Natural killer cell (primary cell): ENCODE measurements at regions of chr22 and their contacts with region 1.

Region 1: GRCh38 chr22:30104501-30105156 is 24.4 kb downstream of the HORMAD2 start:
- DNase-seq: peak in 1 of 2 donors; percentile 44
- ATAC-seq: no peak
- H3K4me3 ChIP-seq: no peak overlapping the region
- H3K4me3 Mint-ChIP-seq: no peak overlapping the region
- H3K27ac ChIP-seq: no peak overlapping the region
- H3K27ac Mint-ChIP-seq: no peak overlapping the region
- H3K4me1 ChIP-seq: peaks cover 3% of the 10 kb centered on the region
- H3K4me1 Mint-ChIP-seq: peaks cover 0 to 5% of the 10 kb centered on the region in 2 donors
- H3K27me3 ChIP-seq: no peaks in the 10 kb centered on the region
- H3K27me3 Mint-ChIP-seq: peaks cover 0 to 6% of the 10 kb centered on the region in 2 donors
- CTCF ChIP-seq: no peak

Region 2: DNA sequence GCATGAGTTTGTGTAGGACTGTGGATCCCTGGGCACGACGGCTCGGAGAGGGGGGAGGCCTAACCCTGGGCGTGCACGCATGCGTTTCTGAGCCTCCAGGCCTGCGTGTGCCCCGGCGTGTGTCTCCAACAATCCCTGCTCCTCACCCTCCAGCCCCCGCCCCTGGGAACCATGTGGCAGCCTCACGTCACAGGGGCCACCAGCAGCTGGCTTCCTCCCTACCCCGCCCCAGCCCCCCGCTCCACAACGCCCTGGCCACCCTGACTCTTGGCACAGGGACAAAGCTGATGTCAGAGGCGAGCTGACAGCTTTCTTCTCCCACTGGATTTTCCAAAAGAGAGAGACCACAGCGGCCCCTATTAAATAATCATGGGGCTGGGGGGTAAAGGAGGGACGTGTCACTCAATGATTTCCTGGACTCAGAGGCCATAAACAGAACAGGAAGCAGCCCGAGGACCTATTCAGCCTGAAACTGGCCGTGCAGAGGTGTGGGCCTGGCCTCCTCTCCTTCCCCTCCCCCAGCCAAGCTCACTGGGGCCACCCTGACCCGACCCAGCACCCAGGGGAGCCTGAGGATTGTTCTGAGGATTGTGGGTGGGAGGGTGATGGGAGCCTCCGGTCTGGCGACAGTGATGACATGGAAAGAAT is 148.7 kb after region 1 on chr22:
- intact Hi-C with region 1: loop called (anchors 1 kb)
- DNase-seq: no peak
- ATAC-seq: no peak
- H3K4me3 ChIP-seq: no peak overlapping the region
- H3K4me3 Mint-ChIP-seq: no peak overlapping the region
- H3K27ac ChIP-seq: no peak overlapping the region
- H3K27ac Mint-ChIP-seq: peak overlapping the region in 1 of 2 donors; percentile 40
- H3K4me1 ChIP-seq: peaks cover 53% of the 10 kb centered on the region
- H3K4me1 Mint-ChIP-seq: peaks cover 6 to 15% of the 10 kb centered on the region in 2 donors
- H3K27me3 ChIP-seq: no peaks in the 10 kb centered on the region
- H3K27me3 Mint-ChIP-seq: peaks cover 5 to 7% of the 10 kb centered on the region in 2 donors
- CTCF ChIP-seq: no peak

Region 3: GRCh38 chr22:30386960-30387827 is 282.6 kb after region 1 on chr22 and contains the start of gene RNF215:
- intact Hi-C with region 1: loop called (anchors 2 kb)
- DNase-seq: peak; percentile 87 to 90
- ATAC-seq: peak; percentile 94 to 97 (median 95)
- H3K4me3 ChIP-seq: peak within 1 kb of the TSS; percentile 9
- H3K4me3 Mint-ChIP-seq: peak within 1 kb of the TSS; percentile 52
- H3K27ac ChIP-seq: no peak within 1 kb of the TSS
- H3K27ac Mint-ChIP-seq: peak within 1 kb of the TSS in 1 of 2 donors; percentile 76
- H3K4me1 ChIP-seq: peaks cover 12% of the 10 kb centered on the region
- H3K4me1 Mint-ChIP-seq: peaks cover 5 to 6% of the 10 kb centered on the region in 2 donors
- H3K27me3 ChIP-seq: no peaks in the 10 kb centered on the region
- H3K27me3 Mint-ChIP-seq: peaks cover 0 to 5% of the 10 kb centered on the region in 2 donors
- CTCF ChIP-seq: peak; percentile 89
- total RNA-seq, gene RNF215: 7.5 to 9.8 (median 9.5) TPM

Region 4: DNA sequence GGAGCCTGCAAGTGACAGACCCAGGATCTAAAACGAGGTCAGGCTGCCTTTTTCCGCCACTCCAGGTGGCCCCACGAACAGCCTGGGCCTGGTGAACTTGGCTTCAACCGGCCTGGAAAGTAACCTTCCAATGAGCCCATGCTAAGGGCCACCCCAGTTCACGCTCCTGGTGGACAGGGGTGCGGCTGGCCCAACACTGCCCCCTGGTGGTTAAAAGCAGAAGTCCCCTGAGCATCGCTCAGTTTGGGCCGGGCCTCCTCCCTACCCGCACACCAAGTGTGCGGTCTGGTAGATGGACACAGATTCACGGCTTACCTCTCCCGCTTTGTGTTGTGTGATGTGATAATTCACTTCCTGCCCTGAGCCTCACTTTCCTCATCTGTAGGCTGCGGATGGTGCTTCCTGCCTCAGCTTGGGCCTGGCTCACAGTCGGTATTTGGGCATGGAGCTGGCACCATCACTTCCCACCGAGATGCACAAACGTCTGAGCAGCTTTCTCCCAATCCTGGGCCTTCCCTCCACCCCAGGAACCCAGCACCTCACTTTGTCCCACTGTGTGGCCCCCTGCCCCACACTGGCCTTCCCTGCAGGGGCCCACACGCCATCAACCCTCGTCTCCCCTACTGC is 380.8 kb after region 1 on chr22:
- intact Hi-C with region 1: loop called (anchors 10 kb)
- DNase-seq: peak; percentile 69 to 87
- ATAC-seq: peak; percentile 86 to 99 (median 99)
- H3K4me3 ChIP-seq: no peak overlapping the region
- H3K4me3 Mint-ChIP-seq: no peak overlapping the region
- H3K27ac ChIP-seq: no peak overlapping the region
- H3K27ac Mint-ChIP-seq: no peak overlapping the region
- H3K4me1 ChIP-seq: peaks cover 5% of the 10 kb centered on the region
- H3K4me1 Mint-ChIP-seq: peaks cover 0 to 5% of the 10 kb centered on the region in 2 donors
- H3K27me3 ChIP-seq: no peaks in the 10 kb centered on the region
- H3K27me3 Mint-ChIP-seq: peaks cover 3 to 5% of the 10 kb centered on the region in 2 donors
- CTCF ChIP-seq: peak; percentile 96